ENCODE measurements at regions of chr5 and their contacts with region 1.

Region 1: GRCh38 chr5:129767906-129768380 is 20.0 kb downstream of the MINAR2 start:
- DNase-seq: peak; percentile 93
- H3K4me3 ChIP-seq: no peak overlapping the region
- H3K27ac ChIP-seq: no peak overlapping the region
- H3K4me1 ChIP-seq: no peaks in the 10 kb centered on the region
- H3K27me3 ChIP-seq: peaks cover 4% of the 10 kb centered on the region
- CTCF ChIP-seq: peak; percentile 96

Region 2: GRCh38 chr5:128905571-128906110 is 862.3 kb before region 1 on chr5:
- CTCF ChIA-PET with region 1: no interaction called
- POLR2A ChIA-PET with region 1: no interaction called
- intact Hi-C with region 1: loop called (anchors 2 kb)
- DNase-seq: peak; percentile 67
- H3K4me3 ChIP-seq: no peak overlapping the region
- H3K27ac ChIP-seq: no peak overlapping the region
- H3K4me1 ChIP-seq: no peaks in the 10 kb centered on the region
- H3K27me3 ChIP-seq: peaks cover 4% of the 10 kb centered on the region
- CTCF ChIP-seq: peak; percentile 82

Region 3: GRCh38 chr5:129400322-129400983 is 367.5 kb before region 1 on chr5:
- CTCF ChIA-PET with region 1: no interaction called
- POLR2A ChIA-PET with region 1: no interaction called
- intact Hi-C with region 1: loop called (anchors 5 kb)
- DNase-seq: no peak
- H3K4me3 ChIP-seq: no peak overlapping the region
- H3K27ac ChIP-seq: no peak overlapping the region
- H3K4me1 ChIP-seq: no peaks in the 10 kb centered on the region
- H3K27me3 ChIP-seq: peaks cover 12% of the 10 kb centered on the region
- CTCF ChIP-seq: peak; percentile 42; the same call in 1 of the 2 replicates

Region 4: DNA sequence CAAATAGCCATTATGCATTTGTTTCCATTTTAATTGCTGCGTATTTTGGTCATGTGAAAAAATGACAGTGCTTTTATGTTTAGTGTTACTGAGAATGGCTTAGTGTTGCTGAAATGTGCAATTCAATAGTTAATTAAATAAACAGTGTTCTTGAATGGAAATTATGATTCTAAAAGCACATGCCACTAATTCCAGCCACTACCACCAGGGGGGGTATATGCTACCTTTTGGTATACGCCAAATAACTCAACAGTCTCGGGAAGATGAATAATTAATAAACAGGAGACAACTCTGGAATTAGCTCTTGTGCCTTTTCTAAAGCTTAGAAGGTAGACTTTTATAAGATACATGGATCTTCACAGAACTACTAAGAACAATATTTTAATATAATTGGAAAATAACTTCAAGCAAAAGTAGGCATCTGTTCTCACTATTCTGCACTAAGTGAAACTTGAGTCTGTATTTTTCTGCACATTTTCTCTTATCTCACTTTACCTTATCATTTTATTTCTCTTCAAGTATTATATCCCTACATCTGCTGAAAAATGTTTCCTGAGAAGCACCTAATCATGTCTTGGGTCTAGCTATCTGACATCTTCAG is 103.5 kb before region 1 on chr5:
- CTCF ChIA-PET with region 1: no interaction called
- POLR2A ChIA-PET with region 1: no interaction called
- intact Hi-C with region 1: loop called (anchors 1 kb)
- DNase-seq: peak; percentile 78
- H3K4me3 ChIP-seq: no peak overlapping the region
- H3K27ac ChIP-seq: no peak overlapping the region
- H3K4me1 ChIP-seq: no peaks in the 10 kb centered on the region
- H3K27me3 ChIP-seq: no peaks in the 10 kb centered on the region
- CTCF ChIP-seq: peak; percentile 91

Region 5: DNA sequence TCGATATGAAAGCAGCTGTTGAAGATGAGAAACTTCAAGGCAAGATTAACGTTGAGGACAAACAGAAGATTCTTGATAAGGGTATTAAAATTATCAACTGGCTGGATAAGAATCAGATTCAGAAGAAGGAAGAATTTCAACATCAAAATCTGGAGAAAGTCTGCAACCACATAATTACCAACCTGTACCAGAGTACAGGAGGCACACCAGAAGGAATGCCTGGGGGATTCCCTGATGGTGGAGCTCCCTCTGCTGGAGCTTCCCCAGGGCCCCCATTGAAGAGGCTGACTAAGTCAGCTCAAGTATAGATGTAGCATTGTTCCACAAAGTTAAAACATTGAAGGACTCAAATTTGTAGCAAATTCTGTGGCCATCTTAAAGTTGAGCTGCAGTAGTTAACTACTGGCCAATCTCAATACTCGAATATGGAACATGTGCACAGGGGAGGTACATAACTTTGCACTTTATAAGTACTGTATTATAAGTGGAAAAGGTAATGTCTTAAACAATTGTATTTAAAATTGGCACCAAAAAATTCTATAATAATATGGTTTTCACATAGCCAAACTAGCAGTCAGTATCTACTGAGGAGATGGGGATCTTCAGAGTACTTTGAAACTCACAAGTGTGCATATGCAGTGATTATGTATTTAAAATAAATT is 373.8 kb after region 1 on chr5:
- CTCF ChIA-PET with region 1: no interaction called
- POLR2A ChIA-PET with region 1: no interaction called
- intact Hi-C with region 1: loop called (anchors 2 kb)
- DNase-seq: no peak
- H3K4me3 ChIP-seq: no peak overlapping the region
- H3K27ac ChIP-seq: no peak overlapping the region
- H3K4me1 ChIP-seq: no peaks in the 10 kb centered on the region
- H3K27me3 ChIP-seq: no peaks in the 10 kb centered on the region
- CTCF ChIP-seq: peak; percentile 59

Region 6: DNA sequence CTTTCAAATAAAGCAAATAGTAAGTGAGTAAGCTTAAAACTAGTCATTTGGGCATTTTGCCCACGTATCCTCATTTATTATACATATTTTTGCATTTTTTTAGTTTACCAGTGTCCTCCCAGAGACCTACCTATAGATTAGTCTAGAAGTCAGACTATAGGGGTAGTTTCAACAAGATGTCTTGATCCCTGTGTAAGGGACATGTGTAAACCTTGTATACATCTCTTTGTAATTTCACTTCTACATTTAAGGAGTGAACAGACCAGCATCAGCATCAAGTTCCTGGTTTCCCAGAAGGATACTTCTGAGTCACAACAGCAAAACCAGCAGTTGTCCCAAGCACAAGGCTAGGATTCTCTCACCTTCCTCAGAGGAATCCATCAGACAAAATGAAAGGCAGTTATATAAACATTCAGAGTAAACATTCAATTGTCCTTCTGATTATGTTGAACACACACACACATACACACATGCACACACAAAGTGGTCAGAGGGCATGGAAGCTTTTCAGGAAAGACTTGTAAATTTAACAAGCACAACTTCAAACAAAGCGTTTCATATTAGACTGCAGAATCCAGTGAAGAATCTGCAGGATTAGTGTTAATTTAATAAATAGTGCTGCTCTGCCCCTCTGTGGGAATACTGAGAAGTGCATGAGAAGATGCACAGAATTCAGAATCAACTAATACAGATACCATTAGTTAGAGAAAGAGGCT is 1341.8 kb after region 1 on chr5:
- CTCF ChIA-PET with region 1: no interaction called
- POLR2A ChIA-PET with region 1: no interaction called
- intact Hi-C with region 1: loop called (anchors 5 kb)
- DNase-seq: peak; percentile 65
- H3K4me3 ChIP-seq: no peak overlapping the region
- H3K27ac ChIP-seq: no peak overlapping the region
- H3K4me1 ChIP-seq: no peaks in the 10 kb centered on the region
- H3K27me3 ChIP-seq: peaks cover 5% of the 10 kb centered on the region
- CTCF ChIP-seq: peak; percentile 80

Measured in A673 (cell line).